Activated T-helper 1 cell treated with anti-CD3 and anti-CD28 coated beads, Interleukin-12 subunit alpha, Interleukin-12 subunit beta, Interleukin-2, Interleukin-4 antibody, amounts not matched to agents 30 ng/mL and 10 ng/mL and 1 ng/mL, durations not matched to agents 14 hours and 24 hours and 36 hours (primary cell): ENCODE measurements at regions of chr2 and their contacts with region 1.

Region 1: GRCh38 chr2:65056215-65057053 is at the start of gene CEP68:
- DNase-seq: peak; percentile 96
- H3K4me3 Mint-ChIP-seq: peak within 1 kb of the TSS; percentile 94
- H3K27ac Mint-ChIP-seq: peak within 1 kb of the TSS; percentile 84
- H3K4me1 Mint-ChIP-seq: peaks cover 48% of the 10 kb centered on the region
- H3K27me3 Mint-ChIP-seq: peaks cover 6% of the 10 kb centered on the region
- total RNA-seq, gene CEP68: 4.0 and 5.5 TPM in 2 replicates

Region 2: GRCh38 chr2:64018923-64019718 is 1037.3 kb before region 1 on chr2 and contains the start of gene VPS54:
- intact Hi-C with region 1: loop called (anchors 10 kb)
- DNase-seq: peak; percentile 53
- H3K4me3 Mint-ChIP-seq: peak within 1 kb of the TSS; percentile 94
- H3K27ac Mint-ChIP-seq: peak within 1 kb of the TSS; percentile 97
- H3K4me1 Mint-ChIP-seq: peaks cover 43% of the 10 kb centered on the region
- H3K27me3 Mint-ChIP-seq: no peaks in the 10 kb centered on the region
- total RNA-seq, gene VPS54: 14.9 and 15.4 TPM in 2 replicates

Region 3: GRCh38 chr2:64653349-64654062 is 402.9 kb before region 1 on chr2 and contains the start of gene SERTAD2:
- intact Hi-C with region 1: loop called (anchors 2 kb)
- DNase-seq: peak; percentile 83
- H3K4me3 Mint-ChIP-seq: peak within 1 kb of the TSS; percentile 90
- H3K27ac Mint-ChIP-seq: peak within 1 kb of the TSS; percentile 90
- H3K4me1 Mint-ChIP-seq: peaks cover 71% of the 10 kb centered on the region
- H3K27me3 Mint-ChIP-seq: no peaks in the 10 kb centered on the region
- total RNA-seq, gene SERTAD2: 27.3 and 28.5 TPM in 2 replicates

Region 4: GRCh38 chr2:64988420-64989125 is 67.9 kb before region 1 on chr2:
- intact Hi-C with region 1: loop called (anchors 1 kb)
- DNase-seq: peak; percentile 75
- H3K4me3 Mint-ChIP-seq: peak overlapping the region; percentile 88
- H3K27ac Mint-ChIP-seq: peak overlapping the region; percentile 92
- H3K4me1 Mint-ChIP-seq: peaks cover 79% of the 10 kb centered on the region
- H3K27me3 Mint-ChIP-seq: peaks cover 11% of the 10 kb centered on the region

Region 5: DNA sequence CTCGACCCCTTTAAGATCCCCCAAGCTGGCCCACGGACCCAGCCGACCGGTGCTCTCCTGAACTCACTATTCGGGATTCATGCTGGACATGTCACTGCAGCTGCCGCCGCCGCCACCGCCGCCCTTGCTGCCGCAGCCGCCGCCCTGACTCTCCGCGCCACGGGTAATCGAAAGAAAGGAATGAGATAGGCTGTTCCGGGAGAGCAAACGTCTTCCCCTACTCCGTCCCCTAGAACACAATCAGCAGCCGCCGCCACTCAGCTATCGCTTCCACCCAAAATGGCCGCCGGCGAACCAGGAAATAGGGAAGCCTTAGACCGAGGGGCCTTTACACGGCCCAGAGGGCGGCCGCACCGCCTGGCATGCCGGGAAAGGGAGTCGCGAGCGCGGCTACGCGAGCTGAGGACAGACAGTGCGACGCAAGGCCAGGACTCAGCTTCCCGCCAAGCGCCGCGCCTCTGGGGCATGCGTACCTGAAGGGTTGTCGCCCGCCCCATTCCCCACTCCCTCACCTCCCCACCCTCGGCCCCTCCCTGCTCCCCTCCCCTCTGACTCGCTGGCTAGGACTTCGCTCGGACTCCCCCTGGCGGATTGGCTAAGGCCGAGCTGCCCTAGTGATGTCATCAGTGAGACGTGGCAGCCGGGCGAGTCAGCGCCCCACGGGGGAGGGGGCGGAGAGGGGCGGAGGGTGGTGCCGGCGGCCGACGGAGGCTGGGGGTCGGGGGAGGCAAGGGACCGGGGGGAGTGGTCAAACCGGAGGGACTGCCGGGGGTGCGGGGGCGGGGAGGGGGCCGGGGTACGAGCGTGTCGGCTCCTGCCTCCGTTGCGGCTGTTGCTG is 73.6 kb after region 1 on chr2 and contains the start of gene RAB1A:
- intact Hi-C with region 1: loop called (anchors 1 kb)
- DNase-seq: peak; percentile 98
- H3K4me3 Mint-ChIP-seq: peak within 1 kb of the TSS; percentile 98
- H3K27ac Mint-ChIP-seq: peak within 1 kb of the TSS; percentile 99
- H3K4me1 Mint-ChIP-seq: peaks cover 30% of the 10 kb centered on the region
- H3K27me3 Mint-ChIP-seq: peaks cover 16% of the 10 kb centered on the region
- total RNA-seq, gene RAB1A: 73.4 and 81.6 TPM in 2 replicates

Region 6: GRCh38 chr2:65329525-65329924 is 273.1 kb after region 1 on chr2:
- intact Hi-C with region 1: no loop called
- DNase-seq: no peak
- H3K4me3 Mint-ChIP-seq: no peak overlapping the region
- H3K27ac Mint-ChIP-seq: no peak overlapping the region
- H3K4me1 Mint-ChIP-seq: no peaks in the 10 kb centered on the region
- H3K27me3 Mint-ChIP-seq: no peaks in the 10 kb centered on the region

Region 7: GRCh38 chr2:65432227-65433190 is 376.1 kb after region 1 on chr2 and contains the start of gene SPRED2:
- intact Hi-C with region 1: loop called (anchors 2 kb)
- DNase-seq: peak; percentile 71
- H3K4me3 Mint-ChIP-seq: peak within 1 kb of the TSS; percentile 95
- H3K27ac Mint-ChIP-seq: peak within 1 kb of the TSS; percentile 92
- H3K4me1 Mint-ChIP-seq: peaks cover 24% of the 10 kb centered on the region
- H3K27me3 Mint-ChIP-seq: peaks cover 37% of the 10 kb centered on the region
- total RNA-seq, gene SPRED2: 8.5 and 9.4 TPM in 2 replicates

Region 8: DNA sequence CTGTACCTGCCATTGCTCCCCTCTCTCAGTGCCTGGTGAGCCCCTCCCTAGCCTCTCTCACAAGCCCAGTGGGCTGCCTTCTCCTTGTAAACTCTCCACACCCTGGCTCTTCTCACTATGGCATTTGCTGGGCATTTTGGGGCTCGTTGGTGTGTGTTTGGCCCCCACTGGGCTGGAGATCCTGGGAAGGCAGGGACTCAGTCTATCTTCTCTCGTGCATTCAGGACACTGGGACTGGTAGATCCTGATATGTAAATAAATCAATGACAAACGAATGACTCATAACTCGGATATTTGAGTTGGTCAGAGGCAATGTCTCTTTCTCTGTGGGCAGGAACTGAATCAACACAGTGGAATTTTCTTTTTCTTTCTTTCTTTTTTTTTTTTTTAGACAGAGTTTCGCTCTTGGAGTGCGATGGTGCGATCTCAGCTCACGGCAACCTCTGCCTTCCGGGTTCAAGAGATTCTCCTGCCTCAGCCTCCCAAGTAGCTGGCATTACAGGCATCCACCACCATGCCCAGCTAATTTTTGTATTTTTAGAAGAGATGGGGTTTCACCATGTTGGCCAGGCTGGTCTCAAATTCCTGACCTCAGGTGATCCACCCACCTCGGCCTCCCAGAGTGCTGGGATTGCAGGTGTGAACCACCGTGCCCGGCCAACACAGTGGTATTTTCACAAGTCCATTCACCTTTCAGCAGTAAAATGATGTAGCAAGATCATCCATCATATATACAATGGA is 520.6 kb after region 1 on chr2:
- intact Hi-C with region 1: loop called (anchors 2 kb)
- DNase-seq: no peak
- H3K4me3 Mint-ChIP-seq: no peak overlapping the region
- H3K27ac Mint-ChIP-seq: no peak overlapping the region
- H3K4me1 Mint-ChIP-seq: no peaks in the 10 kb centered on the region
- H3K27me3 Mint-ChIP-seq: peaks cover 19% of the 10 kb centered on the region